ENCODE measurements at regions of chr6 and their contacts with region 1.

Region 1: GRCh38 chr6:3068329-3069214 is at the start of gene RIPK1:
- DNase-seq: peak; percentile 87 to 97 (median 94)
- ATAC-seq: peak; percentile 73
- H3K4me3 ChIP-seq: peak within 1 kb of the TSS; percentile 84
- H3K4me3 Mint-ChIP-seq: peak within 1 kb of the TSS; percentile 99
- H3K27ac ChIP-seq: peak within 1 kb of the TSS; percentile 88 to 94
- H3K27ac Mint-ChIP-seq: peak within 1 kb of the TSS; percentile 99
- H3K4me1 ChIP-seq: peaks cover 44% of the 10 kb centered on the region
- H3K4me1 Mint-ChIP-seq: peaks cover 74% of the 10 kb centered on the region
- H3K27me3 ChIP-seq: no peaks in the 10 kb centered on the region
- H3K27me3 Mint-ChIP-seq: no peaks in the 10 kb centered on the region
- CTCF ChIP-seq: peak; percentile 40
- total RNA-seq, gene RIPK1: 17.2 to 17.3 TPM

Region 2: DNA sequence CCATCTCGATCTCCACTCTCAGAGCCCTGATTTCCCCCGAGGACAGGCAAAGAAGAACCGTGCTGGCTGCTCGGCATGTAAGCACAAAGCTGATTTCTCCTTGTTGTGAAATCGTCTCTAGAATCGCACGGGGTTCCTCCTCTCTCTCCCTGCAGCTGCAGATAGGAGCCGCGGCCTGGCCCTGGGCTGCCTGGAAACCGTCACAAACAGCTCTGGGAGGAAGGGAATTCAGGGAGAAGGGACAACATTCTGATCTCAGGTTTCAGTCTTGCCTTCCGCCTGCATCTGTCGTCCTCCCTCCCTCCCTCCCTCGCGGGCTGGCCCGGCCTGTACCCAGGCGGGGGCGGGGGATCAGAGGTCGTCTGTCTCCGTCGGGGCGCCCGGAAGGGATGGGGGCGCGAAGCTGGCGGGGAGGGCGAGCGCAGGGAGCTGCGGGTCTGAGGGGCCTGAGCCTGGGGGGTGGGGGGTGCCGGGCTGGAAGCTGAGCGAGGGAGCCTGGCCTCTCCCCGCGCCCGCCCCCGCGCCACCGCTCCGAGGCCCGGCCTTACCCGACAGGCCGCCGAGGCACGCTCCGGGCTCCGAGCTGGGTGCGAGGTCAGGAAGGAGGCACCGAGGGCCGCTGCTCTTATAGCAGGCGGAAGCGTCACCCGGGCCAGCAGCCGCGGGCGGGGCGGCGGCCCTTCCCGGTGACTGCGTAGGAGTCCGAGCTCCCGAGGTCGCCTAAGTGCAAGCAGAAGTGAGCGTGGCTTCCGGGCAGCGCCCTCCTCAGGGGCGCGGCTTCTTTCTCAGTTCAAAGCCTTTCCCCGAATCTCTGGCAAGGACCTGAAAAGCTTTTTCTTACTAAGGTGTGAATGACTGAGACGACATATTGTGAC is 227.1 kb before region 1 on chr6 and contains the start of gene SERPINB1:
- CTCF ChIA-PET with region 1: no interaction called
- POLR2A ChIA-PET with region 1: interaction called, 19 read pairs
- intact Hi-C with region 1: loop called in 1 of 2 experiments (anchors 5 kb)
- DNase-seq: peak; percentile 53 to 90 (median 71)
- ATAC-seq: peak; percentile 76
- H3K4me3 ChIP-seq: peak within 1 kb of the TSS; percentile 72
- H3K4me3 Mint-ChIP-seq: peak within 1 kb of the TSS; percentile 87
- H3K27ac ChIP-seq: peak within 1 kb of the TSS; percentile 76
- H3K27ac Mint-ChIP-seq: peak within 1 kb of the TSS; percentile 86
- H3K4me1 ChIP-seq: peaks cover 43% of the 10 kb centered on the region
- H3K4me1 Mint-ChIP-seq: peaks cover 70% of the 10 kb centered on the region
- H3K27me3 ChIP-seq: no peaks in the 10 kb centered on the region
- H3K27me3 Mint-ChIP-seq: no peaks in the 10 kb centered on the region
- CTCF ChIP-seq: no peak
- total RNA-seq, gene SERPINB1: 58.3 to 58.4 TPM

Region 3: GRCh38 chr6:2931970-2932748 is 136.4 kb before region 1 on chr6:
- CTCF ChIA-PET with region 1: no interaction called
- POLR2A ChIA-PET with region 1: no interaction called
- intact Hi-C with region 1: no loop called
- DNase-seq: peak; percentile 77 to 93 (median 86)
- ATAC-seq: peak; percentile 98
- H3K4me3 ChIP-seq: no peak overlapping the region
- H3K4me3 Mint-ChIP-seq: peak overlapping the region; percentile 0
- H3K27ac ChIP-seq: no peak overlapping the region
- H3K27ac Mint-ChIP-seq: no peak overlapping the region
- H3K4me1 ChIP-seq: peaks cover 16% of the 10 kb centered on the region
- H3K4me1 Mint-ChIP-seq: peaks cover 18% of the 10 kb centered on the region
- H3K27me3 ChIP-seq: no peaks in the 10 kb centered on the region
- H3K27me3 Mint-ChIP-seq: no peaks in the 10 kb centered on the region
- CTCF ChIP-seq: peak; percentile 96

Region 4: DNA sequence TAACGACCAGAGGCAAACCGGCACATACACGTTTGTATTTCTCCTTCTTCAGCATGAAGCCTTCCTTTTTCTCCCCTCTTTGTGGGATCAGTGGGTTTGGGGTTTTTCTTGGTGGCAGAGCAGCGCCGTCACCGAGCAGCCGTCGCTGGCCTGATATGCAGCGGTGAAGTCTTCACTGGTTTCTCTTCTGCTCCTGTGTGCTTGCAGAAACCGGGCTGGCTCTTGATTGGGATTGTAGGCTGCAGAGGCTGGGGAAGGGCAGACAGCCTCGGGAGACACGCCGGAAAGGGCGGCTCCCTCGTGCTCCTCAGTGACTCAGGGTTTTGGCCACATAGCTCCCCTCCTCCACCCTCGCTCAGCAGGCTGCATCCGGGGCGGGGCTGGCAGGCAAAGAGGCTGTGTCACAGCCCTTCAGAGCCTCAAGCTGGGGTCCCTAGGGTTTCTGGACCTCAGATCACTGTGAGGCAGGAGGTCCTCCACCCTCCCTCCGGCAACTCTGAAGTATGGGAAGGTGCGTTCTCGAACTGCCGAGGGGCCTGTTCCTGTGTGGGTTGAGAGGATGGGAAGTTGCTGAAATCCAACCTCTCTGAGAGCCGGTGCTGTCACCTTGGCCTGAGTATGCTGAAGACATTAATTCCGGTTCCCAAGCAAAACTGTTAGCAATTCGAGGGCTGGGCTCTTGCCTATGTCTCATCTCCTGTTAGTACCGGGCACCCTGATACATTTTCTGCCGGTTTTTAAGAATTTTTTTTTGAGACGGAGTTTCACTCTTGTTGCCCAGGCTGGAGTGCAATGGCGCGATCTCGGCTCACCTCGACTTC is 44.7 kb before region 1 on chr6:
- CTCF ChIA-PET with region 1: no interaction called
- POLR2A ChIA-PET with region 1: interaction called, 25 read pairs
- intact Hi-C with region 1: no loop called
- DNase-seq: peak; percentile 58 to 93 (median 88)
- ATAC-seq: peak; percentile 82
- H3K4me3 ChIP-seq: peak overlapping the region; percentile 78
- H3K4me3 Mint-ChIP-seq: peak overlapping the region; percentile 86
- H3K27ac ChIP-seq: peak overlapping the region; percentile 40 to 76
- H3K27ac Mint-ChIP-seq: peak overlapping the region; percentile 77
- H3K4me1 ChIP-seq: peaks cover 68% of the 10 kb centered on the region
- H3K4me1 Mint-ChIP-seq: peaks cover 53% of the 10 kb centered on the region
- H3K27me3 ChIP-seq: no peaks in the 10 kb centered on the region
- H3K27me3 Mint-ChIP-seq: no peaks in the 10 kb centered on the region
- CTCF ChIP-seq: no peak

Region 5: GRCh38 chr6:3118353-3119039 is 49.9 kb after region 1 on chr6 and contains the start of gene BPHL:
- CTCF ChIA-PET with region 1: interaction called, 3 read pairs
- POLR2A ChIA-PET with region 1: interaction called, 7 read pairs
- intact Hi-C with region 1: loop called (anchors 1 to 5 kb)
- DNase-seq: peak; percentile 98 to 100 (median 99)
- ATAC-seq: peak; percentile 90
- H3K4me3 ChIP-seq: peak within 1 kb of the TSS; percentile 67
- H3K4me3 Mint-ChIP-seq: peak within 1 kb of the TSS; percentile 93
- H3K27ac ChIP-seq: peak within 1 kb of the TSS; percentile 91 to 96
- H3K27ac Mint-ChIP-seq: peak within 1 kb of the TSS; percentile 91
- H3K4me1 ChIP-seq: peaks cover 15% of the 10 kb centered on the region
- H3K4me1 Mint-ChIP-seq: peaks cover 19% of the 10 kb centered on the region
- H3K27me3 ChIP-seq: no peaks in the 10 kb centered on the region
- H3K27me3 Mint-ChIP-seq: no peaks in the 10 kb centered on the region
- CTCF ChIP-seq: no peak
- total RNA-seq, gene BPHL: 5.2 to 5.7 TPM

Region 6: GRCh38 chr6:3258720-3259490 is 190.3 kb after region 1 on chr6 and contains the start of gene PSMG4:
- CTCF ChIA-PET with region 1: no interaction called
- POLR2A ChIA-PET with region 1: interaction called, 9 read pairs
- intact Hi-C with region 1: loop called (anchors 2 to 5 kb)
- DNase-seq: peak; percentile 83 to 96 (median 92)
- ATAC-seq: peak; percentile 74
- H3K4me3 ChIP-seq: peak within 1 kb of the TSS; percentile 80
- H3K4me3 Mint-ChIP-seq: peak within 1 kb of the TSS; percentile 96
- H3K27ac ChIP-seq: peak within 1 kb of the TSS in 1 of 2 donors; percentile 50
- H3K27ac Mint-ChIP-seq: peak within 1 kb of the TSS; percentile 92
- H3K4me1 ChIP-seq: peaks cover 45% of the 10 kb centered on the region
- H3K4me1 Mint-ChIP-seq: peaks cover 42% of the 10 kb centered on the region
- H3K27me3 ChIP-seq: no peaks in the 10 kb centered on the region
- H3K27me3 Mint-ChIP-seq: no peaks in the 10 kb centered on the region
- CTCF ChIP-seq: no peak
- total RNA-seq, gene PSMG4: 12.3 to 12.8 TPM